Activated T-helper 2 cell treated with anti-CD3 and anti-CD28 coated beads, Interferon-gamma antibody, Interleukin-2, Interleukin-4, amounts not matched to agents 10 μg/mL and 5 μg/mL and 100 μg/mL, durations not matched to agents 14 hours and 24 hours and 36 hours (primary cell): ENCODE measurements at regions of chr4 and their contacts with region 1.

Region 1: GRCh38 chr4:105061136-105061696 is 85.5 kb upstream of the TET2 start:
- DNase-seq: peak; percentile 18
- H3K4me3 Mint-ChIP-seq: peak overlapping the region; percentile 51
- H3K27ac Mint-ChIP-seq: peak overlapping the region; percentile 80
- H3K4me1 Mint-ChIP-seq: peaks cover 44% of the 10 kb centered on the region
- H3K27me3 Mint-ChIP-seq: peaks cover 2% of the 10 kb centered on the region

Region 2: DNA sequence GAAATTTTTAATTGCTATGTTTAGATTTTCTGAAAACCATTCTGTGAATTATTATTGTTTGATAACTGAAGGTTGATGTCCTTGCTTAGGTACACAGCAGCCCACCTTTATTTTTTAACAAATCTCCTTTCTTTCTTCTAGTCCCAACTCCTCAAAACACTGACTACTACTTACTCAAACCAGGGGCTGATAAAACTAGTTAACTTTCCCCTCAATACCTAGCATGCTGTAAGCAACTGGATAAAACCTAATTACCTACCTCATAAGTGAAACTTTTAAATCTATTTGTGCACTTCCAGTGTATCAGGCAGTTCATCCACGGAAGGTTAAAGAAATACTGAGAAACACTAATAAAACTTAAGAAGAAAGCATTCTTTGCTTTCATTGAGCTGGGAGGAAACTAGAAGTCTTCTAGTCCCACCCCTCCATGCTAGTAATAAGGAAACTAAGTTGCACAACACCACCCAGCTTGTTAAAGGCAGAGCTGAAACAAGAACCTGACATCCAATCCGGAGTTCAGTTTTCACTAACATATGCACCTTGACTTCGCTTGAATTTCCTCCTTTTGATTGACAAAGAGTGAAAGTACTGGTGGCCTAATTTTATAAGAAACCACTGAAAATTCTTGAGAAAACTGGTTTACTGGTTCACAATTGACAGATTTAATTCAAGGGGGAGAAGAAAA is 94.7 kb before region 1 on chr4:
- intact Hi-C with region 1: loop called (anchors 1 kb)
- DNase-seq: peak; percentile 43
- H3K4me3 Mint-ChIP-seq: peak overlapping the region; percentile 66
- H3K27ac Mint-ChIP-seq: peak overlapping the region; percentile 86
- H3K4me1 Mint-ChIP-seq: peaks cover 39% of the 10 kb centered on the region
- H3K27me3 Mint-ChIP-seq: peaks cover 4% of the 10 kb centered on the region

Region 3: GRCh38 chr4:105036991-105037390 is 24.2 kb before region 1 on chr4:
- intact Hi-C with region 1: no loop called
- DNase-seq: no peak
- H3K4me3 Mint-ChIP-seq: no peak overlapping the region
- H3K27ac Mint-ChIP-seq: no peak overlapping the region
- H3K4me1 Mint-ChIP-seq: no peaks in the 10 kb centered on the region
- H3K27me3 Mint-ChIP-seq: peaks cover 20% of the 10 kb centered on the region

Region 4: GRCh38 chr4:105102016-105102415 is 40.8 kb after region 1 on chr4:
- intact Hi-C with region 1: no loop called
- DNase-seq: no peak
- H3K4me3 Mint-ChIP-seq: no peak overlapping the region
- H3K27ac Mint-ChIP-seq: no peak overlapping the region
- H3K4me1 Mint-ChIP-seq: no peaks in the 10 kb centered on the region
- H3K27me3 Mint-ChIP-seq: peaks cover 3% of the 10 kb centered on the region

Region 5: GRCh38 chr4:105191621-105192210 is 130.5 kb after region 1 on chr4:
- intact Hi-C with region 1: loop called (anchors 5 kb)
- DNase-seq: no peak
- H3K4me3 Mint-ChIP-seq: no peak overlapping the region
- H3K27ac Mint-ChIP-seq: peak overlapping the region; percentile 56
- H3K4me1 Mint-ChIP-seq: peaks cover 51% of the 10 kb centered on the region
- H3K27me3 Mint-ChIP-seq: no peaks in the 10 kb centered on the region

Region 6: GRCh38 chr4:105306158-105306781 is 245.1 kb after region 1 on chr4:
- intact Hi-C with region 1: loop called (anchors 1 kb)
- DNase-seq: peak; percentile 47
- H3K4me3 Mint-ChIP-seq: peak overlapping the region; percentile 18
- H3K27ac Mint-ChIP-seq: peak overlapping the region; percentile 74
- H3K4me1 Mint-ChIP-seq: peaks cover 28% of the 10 kb centered on the region
- H3K27me3 Mint-ChIP-seq: no peaks in the 10 kb centered on the region

Region 7: GRCh38 chr4:105471566-105472176 is 410.5 kb after region 1 on chr4:
- intact Hi-C with region 1: loop called (anchors 1 kb)
- DNase-seq: peak; percentile 57
- H3K4me3 Mint-ChIP-seq: peak overlapping the region; percentile 98
- H3K27ac Mint-ChIP-seq: peak overlapping the region; percentile 57
- H3K4me1 Mint-ChIP-seq: peaks cover 41% of the 10 kb centered on the region
- H3K27me3 Mint-ChIP-seq: peaks cover 11% of the 10 kb centered on the region

Region 8: DNA sequence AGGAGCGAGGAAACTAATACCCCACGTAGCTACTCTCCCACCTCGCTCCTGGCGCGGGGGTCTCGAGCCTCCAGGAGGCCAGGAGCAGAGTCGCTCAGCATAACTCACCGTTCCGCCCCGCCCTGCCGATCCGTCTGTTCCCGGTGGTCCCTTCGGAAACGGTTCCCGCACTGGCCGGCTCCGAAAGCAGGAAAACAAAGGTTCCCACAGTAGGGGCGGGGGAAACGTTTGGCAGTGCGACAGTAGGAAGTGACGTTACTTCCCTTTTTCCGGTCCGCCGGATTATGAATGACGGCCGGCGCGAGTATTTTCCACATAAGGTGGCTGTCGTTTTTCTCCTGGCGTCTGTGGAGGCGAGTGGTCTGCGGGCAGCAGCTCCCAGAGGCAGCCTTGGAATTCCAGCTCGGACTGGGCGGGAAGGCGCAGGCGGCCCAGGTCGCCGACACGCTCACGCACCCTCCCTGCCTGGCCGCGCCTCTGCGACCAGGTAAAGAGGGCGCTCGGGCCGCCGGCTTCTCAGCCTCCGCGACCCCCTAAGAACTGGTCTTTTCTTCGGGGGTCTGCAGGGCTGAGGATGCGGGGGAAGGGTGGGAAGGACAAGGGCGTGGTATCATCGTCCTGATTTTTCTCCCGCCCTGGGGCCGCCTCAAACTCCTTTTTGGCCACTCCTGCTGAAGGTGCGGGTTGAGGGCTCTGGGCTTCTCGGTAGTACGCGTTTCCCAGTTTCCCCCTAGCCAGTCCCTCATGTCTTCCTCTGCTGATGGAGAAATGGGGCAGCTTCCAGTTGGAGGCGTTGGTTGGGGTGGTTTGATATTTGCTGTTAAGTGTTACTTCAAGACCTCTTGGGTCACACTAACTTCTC is 647.5 kb after region 1 on chr4 and contains the starts of genes GSTCD and INTS12:
- intact Hi-C with region 1: loop called (anchors 10 kb)
- DNase-seq: peak; percentile 82
- H3K4me3 Mint-ChIP-seq: peak within 1 kb of the TSS; percentile 98
- H3K27ac Mint-ChIP-seq: peak within 1 kb of the TSS; percentile 94
- H3K4me1 Mint-ChIP-seq: peaks cover 26% of the 10 kb centered on the region
- H3K27me3 Mint-ChIP-seq: no peaks in the 10 kb centered on the region
- total RNA-seq, gene GSTCD: 15.7 and 16.7 TPM in 2 replicates
- total RNA-seq, gene INTS12: 18.5 and 22.0 TPM in 2 replicates